ENCODE measurements at regions of chr5 and their contacts with region 1.

Region 1: GRCh38 chr5:91101600-91102379 is 281.3 kb downstream of the ARRDC3 start:
- DNase-seq: no peak
- ATAC-seq: peak; percentile 94

Region 2: GRCh38 chr5:90866333-90866732 is 235.5 kb before region 1 on chr5:
- intact Hi-C with region 1: loop called (anchors 10 kb)
- DNase-seq: no peak
- ATAC-seq: no peak

Region 3: DNA sequence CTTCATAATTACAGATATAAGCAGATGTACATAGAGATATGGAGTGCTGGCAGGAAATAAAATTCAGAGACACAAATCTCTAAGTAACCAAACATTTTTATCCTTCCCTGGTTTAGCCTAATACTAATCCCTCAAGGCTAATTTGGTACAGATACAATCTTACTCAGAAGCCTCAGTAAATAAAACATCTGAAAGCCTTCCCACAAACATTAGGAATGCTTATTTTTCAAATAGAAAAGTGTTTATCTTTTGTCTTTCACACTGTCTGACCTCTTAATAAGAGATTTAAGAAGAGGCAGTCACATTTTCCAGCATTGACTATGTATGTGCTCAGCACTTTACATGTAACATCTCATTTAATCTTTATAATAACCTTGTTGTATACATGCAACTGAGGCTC is 118.1 kb before region 1 on chr5:
- intact Hi-C with region 1: no loop called
- DNase-seq: no peak
- ATAC-seq: no peak

Region 4: GRCh38 chr5:91162534-91163381 is 61.0 kb after region 1 on chr5:
- intact Hi-C with region 1: loop called (anchors 5 kb)
- DNase-seq: no peak
- ATAC-seq: peak; percentile 92

Region 5: GRCh38 chr5:91280362-91281269 is 178.8 kb after region 1 on chr5:
- intact Hi-C with region 1: loop called (anchors 5 kb)
- DNase-seq: peak; percentile 96
- ATAC-seq: peak; percentile 97

Region 6: GRCh38 chr5:91383027-91383955 is 281.5 kb after region 1 on chr5 and contains the start of gene ARRDC3:
- intact Hi-C with region 1: loop called (anchors 1 kb)
- DNase-seq: peak; percentile 99
- ATAC-seq: peak; percentile 82
- total RNA-seq, gene ARRDC3: 19.9 TPM

Measured in Right ventricle myocardium inferior (tissue), 1 donor.